Spleen (tissue), 13 donors: ENCODE measurements at regions of chr3 and their contacts with region 1.

Region 1: DNA sequence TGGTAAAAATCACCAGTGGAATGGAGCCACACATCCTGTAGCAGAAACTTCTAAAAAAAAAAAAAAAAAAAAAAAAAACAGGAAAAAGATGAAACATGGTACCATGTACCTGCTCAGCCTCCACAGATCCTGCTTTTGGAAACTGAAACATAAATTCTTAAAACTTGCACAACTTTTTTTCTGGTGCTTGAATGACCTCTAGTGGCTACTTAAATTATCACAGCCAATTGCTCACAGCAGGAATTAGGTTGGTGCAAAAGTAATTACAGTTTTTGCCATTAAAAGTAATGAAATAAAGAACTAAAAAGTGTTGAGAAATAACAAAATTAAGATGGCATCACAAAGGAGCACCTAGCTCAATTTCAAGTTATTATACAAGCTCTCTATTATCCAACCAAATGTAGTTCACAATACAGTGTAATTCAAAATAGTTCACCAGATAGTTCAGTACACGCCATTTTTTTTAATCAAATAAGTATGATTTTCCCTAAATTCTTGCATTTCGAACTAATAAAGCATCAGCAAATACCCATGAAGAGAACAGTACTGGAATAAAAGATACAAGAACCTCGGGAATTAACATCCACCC is 80.6 kb downstream of the ULK4 start:
- DNase-seq: no peak
- H3K4me3 ChIP-seq: no peak overlapping the region
- H3K27ac ChIP-seq: no peak overlapping the region
- H3K4me1 ChIP-seq: no peaks in the 10 kb centered on the region
- H3K27me3 ChIP-seq: no peaks in the 10 kb centered on the region
- CTCF ChIP-seq: peak; percentile 49 to 83 (median 72)
- POLR2A ChIP-seq: no peak

Region 2: DNA sequence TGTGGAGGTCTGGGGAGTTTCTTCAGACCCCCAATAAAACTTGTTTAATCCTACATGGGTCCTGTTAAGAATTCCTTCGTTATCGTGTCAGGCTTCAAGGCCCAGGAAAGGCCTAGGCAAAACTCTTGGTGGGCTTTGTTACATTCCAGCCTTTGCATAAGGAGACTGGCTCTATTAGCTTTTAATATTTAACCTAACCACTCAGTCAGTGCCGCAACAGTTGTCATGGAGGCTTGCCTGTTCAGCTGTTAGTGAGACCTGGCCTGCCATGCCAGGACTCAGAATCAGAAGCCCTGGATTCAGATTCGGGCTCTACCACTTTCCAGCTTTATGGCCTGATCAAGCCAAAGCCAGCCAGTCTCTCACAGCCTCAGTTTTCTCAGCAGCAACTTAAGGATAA is 1552.3 kb before region 1 on chr3:
- intact Hi-C with region 1: loop called (anchors 5 kb)
- DNase-seq: no peak
- H3K4me3 ChIP-seq: no peak overlapping the region
- H3K27ac ChIP-seq: no peak overlapping the region
- H3K4me1 ChIP-seq: peaks cover 0 to 4% (median 0%) of the 10 kb centered on the region in 6 donors
- H3K27me3 ChIP-seq: no peaks in the 10 kb centered on the region
- CTCF ChIP-seq: no peak
- POLR2A ChIP-seq: no peak